Aorta (tissue), 5 donors: ENCODE measurements at regions of chr2 and their contacts with region 1.

Region 1: GRCh38 chr2:224284134-224284946 is 117.6 kb downstream of the FAM124B start:
- DNase-seq: no peak
- ATAC-seq: no peak
- H3K4me3 ChIP-seq: no peak overlapping the region
- H3K27ac ChIP-seq: no peak overlapping the region
- H3K4me1 ChIP-seq: no peaks in the 10 kb centered on the region
- H3K27me3 ChIP-seq: no peaks in the 10 kb centered on the region

Region 2: DNA sequence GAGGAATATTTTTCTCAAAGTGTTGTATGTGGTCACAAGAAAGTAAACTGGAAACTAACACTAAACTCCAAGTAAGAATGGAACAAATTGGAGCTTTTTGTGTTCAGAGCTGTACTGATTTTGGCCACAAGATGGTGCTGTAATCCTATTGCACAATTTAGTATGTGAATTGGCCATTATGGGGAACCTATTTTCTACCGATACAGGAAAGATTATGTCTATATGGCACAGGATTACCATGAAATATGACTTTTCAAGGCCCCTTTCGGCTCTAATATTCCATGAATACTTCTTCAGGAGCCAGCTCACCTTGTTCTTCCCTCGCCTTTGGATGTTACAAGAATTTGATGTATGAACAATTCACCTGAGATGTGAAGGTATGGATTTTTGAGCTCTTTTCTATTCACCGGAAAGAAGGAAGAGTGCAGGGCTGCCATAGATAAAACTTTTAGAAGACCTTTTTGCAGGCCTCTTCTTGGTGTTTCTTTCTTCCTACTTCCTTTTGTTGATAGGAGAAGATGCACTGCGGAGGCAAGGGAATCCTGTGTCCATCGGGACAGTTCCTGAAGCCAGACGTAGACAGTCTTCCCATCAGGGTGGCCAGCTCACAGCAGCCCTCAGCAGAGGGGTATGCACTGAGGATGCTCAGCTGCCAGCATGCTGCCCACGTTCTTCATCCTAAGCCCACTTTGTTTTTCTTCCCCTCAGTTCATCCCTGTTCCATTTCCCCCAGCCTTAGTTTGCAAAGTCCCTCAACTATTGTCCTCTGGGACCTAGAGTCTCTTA is 313.8 kb before region 1 on chr2:
- intact Hi-C with region 1: loop called (anchors 2 to 5 kb)
- DNase-seq: no peak
- ATAC-seq: peak; percentile 67
- H3K4me3 ChIP-seq: no peak overlapping the region
- H3K27ac ChIP-seq: no peak overlapping the region
- H3K4me1 ChIP-seq: no peaks in the 10 kb centered on the region
- H3K27me3 ChIP-seq: no peaks in the 10 kb centered on the region

Region 3: GRCh38 chr2:223993621-223994232 is 290.6 kb before region 1 on chr2:
- intact Hi-C with region 1: loop called (anchors 1 to 2 kb)
- DNase-seq: peak in 1 of 2 donors; percentile 58
- ATAC-seq: peak; percentile 87
- H3K4me3 ChIP-seq: no peak overlapping the region
- H3K27ac ChIP-seq: no peak overlapping the region
- H3K4me1 ChIP-seq: no peaks in the 10 kb centered on the region
- H3K27me3 ChIP-seq: no peaks in the 10 kb centered on the region

Region 4: DNA sequence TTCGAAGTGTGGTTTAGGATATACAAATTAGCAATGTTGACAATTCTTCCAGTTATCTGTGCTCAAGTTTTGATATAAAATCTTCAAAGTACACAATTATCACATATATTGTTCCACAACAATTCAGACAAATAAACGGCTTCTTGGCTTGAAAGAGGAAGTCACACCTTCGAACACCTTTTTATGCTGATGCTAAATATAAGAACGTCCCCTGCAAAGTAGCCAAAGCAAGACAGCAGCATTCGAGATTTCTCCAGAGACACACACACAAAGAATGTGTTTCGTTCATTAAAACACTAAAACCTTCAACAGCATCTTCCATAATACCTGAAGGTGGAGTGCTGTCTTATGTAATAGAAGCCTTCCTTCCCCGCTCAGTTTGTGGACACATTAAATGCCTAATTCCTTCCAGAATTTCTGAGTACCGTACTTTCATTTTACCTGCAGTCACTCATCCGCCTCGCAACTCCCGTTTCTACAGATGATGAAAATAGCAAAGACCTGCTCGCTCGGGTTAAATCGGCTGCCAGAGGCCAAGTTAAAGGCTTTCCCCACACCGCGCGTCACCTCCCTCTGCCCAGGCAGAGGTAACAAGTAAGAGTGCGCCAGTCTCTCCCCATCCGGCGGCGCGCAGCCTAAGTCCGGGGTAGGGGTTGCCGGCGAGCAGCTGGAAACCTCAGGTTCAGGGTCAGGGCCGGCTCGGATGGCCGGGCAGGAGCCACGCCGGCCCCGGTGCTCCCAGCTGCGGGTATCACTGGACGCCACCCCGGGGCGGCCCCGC is 246.1 kb before region 1 on chr2:
- intact Hi-C with region 1: loop called in 1 of 2 experiments (anchors 1 kb)
- DNase-seq: peak; percentile 48 to 76
- ATAC-seq: no peak
- H3K4me3 ChIP-seq: peak overlapping the region; percentile 63 to 65
- H3K27ac ChIP-seq: no peak overlapping the region
- H3K4me1 ChIP-seq: no peaks in the 10 kb centered on the region
- H3K27me3 ChIP-seq: no peaks in the 10 kb centered on the region